ENCODE measurements at regions of chr1 and their contacts with region 1.

Region 1: DNA sequence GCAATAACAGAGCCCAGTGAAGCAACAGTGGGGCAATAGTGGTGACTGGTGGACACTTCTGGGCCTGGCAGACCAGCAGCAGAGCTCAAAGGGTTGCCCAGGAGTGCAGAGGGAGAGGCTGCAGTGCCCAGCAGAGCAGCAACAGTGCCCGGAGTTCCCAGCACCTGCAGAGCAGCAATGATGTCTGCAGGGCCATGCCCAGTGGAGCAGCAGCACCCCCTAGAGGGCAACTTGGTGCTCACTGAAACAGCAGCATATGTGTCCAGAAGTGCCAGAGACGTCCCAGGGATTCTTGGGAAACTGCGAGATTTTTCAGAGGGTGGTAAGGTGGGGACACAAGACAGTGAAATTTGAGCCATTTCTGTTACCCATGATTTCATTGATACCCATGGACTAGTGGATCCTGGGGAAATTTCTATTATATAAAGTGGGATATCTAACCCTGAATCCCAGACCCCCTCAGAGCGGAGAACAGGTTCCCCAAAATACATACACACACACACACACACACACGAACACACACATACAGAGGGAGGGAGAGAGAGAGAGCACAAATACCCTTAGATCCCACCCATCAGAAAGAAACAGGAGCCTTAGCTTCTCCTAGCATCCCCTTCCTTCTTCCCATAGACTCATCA is 156.9 kb upstream of the GJB5 start:
- DNase-seq: peak; percentile 6 to 82 (median 55)
- ATAC-seq: peak; percentile 99
- H3K4me3 ChIP-seq: no peak overlapping the region
- H3K27ac ChIP-seq: no peak overlapping the region
- H3K4me1 ChIP-seq: no peaks in the 10 kb centered on the region
- H3K27me3 ChIP-seq: peaks cover 0 to 15% of the 10 kb centered on the region in 2 donors
- CTCF ChIP-seq: peak; percentile 70 to 72

Region 2: GRCh38 chr1:33633019-33633801 is 964.8 kb before region 1 on chr1:
- intact Hi-C with region 1: loop called in 1 of 2 experiments (anchors 10 kb)
- DNase-seq: peak; percentile 74 to 89 (median 88)
- ATAC-seq: peak; percentile 99
- H3K4me3 ChIP-seq: no peak overlapping the region
- H3K27ac ChIP-seq: no peak overlapping the region
- H3K4me1 ChIP-seq: no peaks in the 10 kb centered on the region
- H3K27me3 ChIP-seq: peaks cover 9 to 44% of the 10 kb centered on the region in 2 donors
- CTCF ChIP-seq: peak; percentile 75 to 94

Measured in left lung (tissue), 14 donors.